Naive thymus-derived CD4-positive, alpha-beta T cell (primary cell): ENCODE measurements at regions of chr4 and their contacts with region 1.

Region 1: DNA sequence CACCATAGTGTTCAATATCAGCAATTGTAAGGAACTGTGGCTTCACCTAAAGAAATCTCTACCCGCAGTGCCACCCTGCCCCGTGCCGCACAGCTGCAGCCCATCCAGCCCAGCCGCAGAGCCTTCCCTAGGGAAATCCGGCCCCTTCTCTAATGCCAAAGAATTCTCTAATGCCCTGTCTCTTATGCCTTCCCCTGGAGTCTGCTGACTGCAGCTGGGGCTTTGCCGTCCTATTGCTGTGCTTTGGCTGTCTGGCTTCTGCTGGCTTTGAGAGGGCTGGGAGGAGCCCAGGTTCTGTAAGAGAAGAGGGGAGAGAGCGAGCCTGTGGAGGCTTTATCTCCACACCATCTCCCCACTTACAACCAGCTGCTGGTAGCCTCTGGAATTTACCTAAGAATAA is 85.9 kb upstream of the HELT start:
- DNase-seq: no peak
- ATAC-seq: no peak
- H3K4me3 ChIP-seq: no peak overlapping the region
- H3K4me3 Mint-ChIP-seq: no peak overlapping the region
- H3K27ac ChIP-seq: no peak overlapping the region
- H3K27ac Mint-ChIP-seq: no peak overlapping the region
- H3K4me1 ChIP-seq: no peaks in the 10 kb centered on the region
- H3K4me1 Mint-ChIP-seq: peaks cover 0 to 9% (median 0%) of the 10 kb centered on the region in 7 donors
- H3K27me3 ChIP-seq: no peaks in the 10 kb centered on the region
- H3K27me3 Mint-ChIP-seq: peaks cover 5 to 20% (median 13%) of the 10 kb centered on the region in 5 donors

Region 2: DNA sequence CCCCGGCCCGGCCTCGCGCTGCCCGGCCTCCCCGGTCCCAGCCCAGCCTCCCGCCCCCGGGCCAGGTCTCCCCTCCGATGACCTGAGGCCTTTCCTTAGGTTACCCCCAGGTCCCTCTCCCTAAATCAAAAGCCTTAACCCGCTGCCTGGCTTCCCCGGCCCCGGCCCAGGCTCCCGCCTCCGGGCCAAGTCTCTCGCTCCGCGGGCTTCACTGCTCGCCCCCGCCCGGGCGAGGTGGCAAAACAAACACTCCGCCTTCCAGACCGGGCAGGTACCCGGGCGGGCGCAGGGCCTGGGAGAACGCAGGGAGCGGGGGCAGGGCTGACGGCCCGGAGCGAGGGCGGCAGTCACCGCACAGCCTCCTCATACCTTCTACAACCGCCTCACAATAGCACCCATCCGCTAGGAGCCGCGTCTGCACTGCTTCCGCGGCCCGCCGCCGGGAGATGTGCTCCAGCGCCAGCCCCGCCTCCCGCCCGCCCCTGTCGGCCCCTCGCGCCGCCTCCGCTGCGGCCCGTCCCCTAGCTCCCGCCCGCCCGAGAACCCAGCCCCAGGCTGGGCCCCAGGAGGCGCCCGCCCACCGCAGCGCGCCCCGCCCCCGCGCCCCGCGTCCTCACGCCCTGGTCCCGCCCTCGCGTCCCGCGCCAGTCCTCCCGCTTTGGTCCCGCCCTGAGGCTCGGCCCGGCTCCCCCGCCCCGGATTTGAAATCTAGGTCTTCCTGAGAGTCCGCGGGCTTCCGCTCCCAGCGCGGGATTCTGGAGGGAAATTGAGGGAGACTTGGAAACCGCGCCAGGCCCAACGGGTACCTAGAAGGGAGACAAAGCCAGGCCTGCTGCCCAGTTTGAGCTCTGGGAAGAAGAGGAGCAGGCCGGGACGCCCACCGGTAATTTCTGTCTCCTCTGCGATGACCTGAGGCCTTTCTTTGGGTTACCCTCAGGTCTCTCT is 283.0 kb before region 1 on chr4 and contains the starts of genes CASP3 and PRIMPOL:
- CTCF ChIA-PET with region 1: no interaction called
- POLR2A ChIA-PET with region 1: no interaction called
- intact Hi-C with region 1: no loop called
- DNase-seq: peak; percentile 90 to 98 (median 93)
- ATAC-seq: peak; percentile 96
- H3K4me3 ChIP-seq: peak within 1 kb of the TSS; percentile 92
- H3K4me3 Mint-ChIP-seq: peak within 1 kb of the TSS; percentile 92 to 99 (median 97)
- H3K27ac ChIP-seq: peak within 1 kb of the TSS; percentile 91
- H3K27ac Mint-ChIP-seq: peak within 1 kb of the TSS; percentile 91 to 97 (median 95)
- H3K4me1 ChIP-seq: peaks cover 26 to 37% of the 10 kb centered on the region in 2 donors
- H3K4me1 Mint-ChIP-seq: peaks cover 47 to 69% (median 54%) of the 10 kb centered on the region in 7 donors
- H3K27me3 ChIP-seq: no peaks in the 10 kb centered on the region
- H3K27me3 Mint-ChIP-seq: no peaks in the 10 kb centered on the region
- total RNA-seq, gene CASP3: 12.4 to 73.4 (median 17.2) TPM
- total RNA-seq, gene PRIMPOL: 12.1 to 19.3 (median 16.7) TPM

Region 3: DNA sequence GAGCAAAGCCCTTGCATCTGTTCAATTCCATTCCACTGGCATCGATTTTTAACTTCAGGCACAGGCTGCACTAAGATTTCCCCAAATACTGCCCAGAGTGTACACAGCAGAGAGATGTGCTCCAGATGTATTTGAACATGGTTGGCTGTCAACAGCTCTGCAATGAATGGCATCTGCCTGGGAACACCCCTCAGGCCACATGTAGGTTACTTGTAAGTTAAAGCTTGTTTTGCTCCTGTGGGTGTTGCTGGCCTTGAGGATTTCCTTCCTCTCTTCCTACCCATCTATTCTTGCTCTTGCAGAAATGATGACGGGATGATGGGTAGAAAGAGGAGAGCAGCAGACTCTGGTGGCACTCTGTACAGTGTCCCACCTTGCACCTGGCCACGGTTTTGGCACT is 16.7 kb after region 1 on chr4:
- CTCF ChIA-PET with region 1: no interaction called
- POLR2A ChIA-PET with region 1: no interaction called
- intact Hi-C with region 1: loop called in 1 of 2 experiments (anchors 2 kb)
- DNase-seq: no peak
- ATAC-seq: no peak
- H3K4me3 ChIP-seq: no peak overlapping the region
- H3K4me3 Mint-ChIP-seq: no peak overlapping the region
- H3K27ac ChIP-seq: no peak overlapping the region
- H3K27ac Mint-ChIP-seq: no peak overlapping the region
- H3K4me1 ChIP-seq: no peaks in the 10 kb centered on the region
- H3K4me1 Mint-ChIP-seq: no peaks in the 10 kb centered on the region
- H3K27me3 ChIP-seq: no peaks in the 10 kb centered on the region
- H3K27me3 Mint-ChIP-seq: peaks cover 25 to 49% (median 37%) of the 10 kb centered on the region in 5 donors